Activated B cell treated with CpG ODN at 0.5 μM for 24 hours (primary cell): ENCODE measurements at regions of chr14 and their contacts with region 1.

Region 1: DNA sequence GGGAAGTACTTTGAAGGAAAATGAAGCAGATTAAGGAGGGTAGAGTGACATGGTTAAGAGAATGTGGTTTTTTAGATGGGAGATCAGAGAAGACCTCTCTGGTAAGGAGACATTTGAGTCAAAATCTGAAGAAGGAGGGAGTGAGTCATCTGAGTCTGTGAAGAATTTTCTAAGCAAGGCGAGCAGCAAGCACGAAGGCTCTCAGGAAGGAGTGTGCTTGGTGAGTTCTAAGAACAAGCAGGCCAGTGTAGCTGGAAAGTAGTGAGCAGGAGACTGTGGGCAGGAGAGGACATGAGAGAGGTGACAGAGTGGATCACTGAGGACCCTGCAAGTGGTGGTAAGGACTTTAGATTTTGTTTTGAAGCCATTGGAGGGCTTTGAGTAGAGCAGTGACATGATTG is 76.3 kb upstream of the FUT8 start:
- DNase-seq: no peak
- ATAC-seq: peak; percentile 70
- H3K4me3 Mint-ChIP-seq: peak overlapping the region; percentile 52
- H3K27ac Mint-ChIP-seq: peak overlapping the region; percentile 63
- H3K4me1 Mint-ChIP-seq: peaks cover 59% of the 10 kb centered on the region
- H3K27me3 Mint-ChIP-seq: no peaks in the 10 kb centered on the region
- CTCF ChIP-seq: no peak

Region 2: GRCh38 chr14:65054471-65055085 is 281.6 kb before region 1 on chr14:
- CTCF ChIA-PET with region 1: no interaction called
- POLR2A ChIA-PET with region 1: no interaction called
- intact Hi-C with region 1: no loop called
- DNase-seq: no peak
- ATAC-seq: no peak
- H3K4me3 Mint-ChIP-seq: no peak overlapping the region
- H3K27ac Mint-ChIP-seq: no peak overlapping the region
- H3K4me1 Mint-ChIP-seq: no peaks in the 10 kb centered on the region
- H3K27me3 Mint-ChIP-seq: no peaks in the 10 kb centered on the region
- CTCF ChIP-seq: no peak

Region 3: GRCh38 chr14:65346947-65347346 is 10.8 kb after region 1 on chr14:
- CTCF ChIA-PET with region 1: no interaction called
- POLR2A ChIA-PET with region 1: interaction called, 18 read pairs
- intact Hi-C with region 1: loop called (anchors 1 kb)
- DNase-seq: no peak
- ATAC-seq: no peak
- H3K4me3 Mint-ChIP-seq: no peak overlapping the region
- H3K27ac Mint-ChIP-seq: no peak overlapping the region
- H3K4me1 Mint-ChIP-seq: peaks cover 34% of the 10 kb centered on the region
- H3K27me3 Mint-ChIP-seq: no peaks in the 10 kb centered on the region
- CTCF ChIP-seq: no peak

Region 4: GRCh38 chr14:65373679-65374039 is 37.5 kb after region 1 on chr14:
- CTCF ChIA-PET with region 1: no interaction called
- POLR2A ChIA-PET with region 1: no interaction called
- intact Hi-C with region 1: loop called (anchors 5 kb)
- DNase-seq: no peak
- ATAC-seq: no peak
- H3K4me3 Mint-ChIP-seq: no peak overlapping the region
- H3K27ac Mint-ChIP-seq: no peak overlapping the region
- H3K4me1 Mint-ChIP-seq: peaks cover 35% of the 10 kb centered on the region
- H3K27me3 Mint-ChIP-seq: no peaks in the 10 kb centered on the region
- CTCF ChIP-seq: no peak